ENCODE measurements at regions of chr2 and their contacts with region 1.

Region 1: GRCh38 chr2:234257856-234258561 is 207.5 kb downstream of the SPP2 start:
- DNase-seq: peak; percentile 92 to 98
- H3K4me3 ChIP-seq: peak overlapping the region; percentile 19; the same call in 1 of the 2 replicates
- H3K27ac ChIP-seq: peak overlapping the region; percentile 88
- H3K4me1 ChIP-seq: peaks cover 61% of the 10 kb centered on the region
- H3K27me3 ChIP-seq: no peaks in the 10 kb centered on the region
- CTCF ChIP-seq: peak; percentile 85

Region 2: GRCh38 chr2:234169187-234169570 is 88.8 kb before region 1 on chr2:
- CTCF ChIA-PET with region 1: no interaction called
- POLR2A ChIA-PET with region 1: no interaction called
- intact Hi-C with region 1: loop called (anchors 1 kb)
- DNase-seq: peak; percentile 60 to 79
- H3K4me3 ChIP-seq: no peak overlapping the region
- H3K27ac ChIP-seq: no peak overlapping the region
- H3K4me1 ChIP-seq: peaks cover 31% of the 10 kb centered on the region
- H3K27me3 ChIP-seq: no peaks in the 10 kb centered on the region
- CTCF ChIP-seq: no peak

Region 3: GRCh38 chr2:234203135-234203984 is 54.6 kb before region 1 on chr2:
- CTCF ChIA-PET with region 1: no interaction called
- POLR2A ChIA-PET with region 1: interaction called, 3 read pairs
- intact Hi-C with region 1: loop called (anchors 1 kb)
- DNase-seq: peak; percentile 63 to 98
- H3K4me3 ChIP-seq: peak overlapping the region; percentile 1; the same call in 1 of the 2 replicates
- H3K27ac ChIP-seq: peak overlapping the region; percentile 91
- H3K4me1 ChIP-seq: peaks cover 44% of the 10 kb centered on the region
- H3K27me3 ChIP-seq: no peaks in the 10 kb centered on the region
- CTCF ChIP-seq: no peak

Region 4: DNA sequence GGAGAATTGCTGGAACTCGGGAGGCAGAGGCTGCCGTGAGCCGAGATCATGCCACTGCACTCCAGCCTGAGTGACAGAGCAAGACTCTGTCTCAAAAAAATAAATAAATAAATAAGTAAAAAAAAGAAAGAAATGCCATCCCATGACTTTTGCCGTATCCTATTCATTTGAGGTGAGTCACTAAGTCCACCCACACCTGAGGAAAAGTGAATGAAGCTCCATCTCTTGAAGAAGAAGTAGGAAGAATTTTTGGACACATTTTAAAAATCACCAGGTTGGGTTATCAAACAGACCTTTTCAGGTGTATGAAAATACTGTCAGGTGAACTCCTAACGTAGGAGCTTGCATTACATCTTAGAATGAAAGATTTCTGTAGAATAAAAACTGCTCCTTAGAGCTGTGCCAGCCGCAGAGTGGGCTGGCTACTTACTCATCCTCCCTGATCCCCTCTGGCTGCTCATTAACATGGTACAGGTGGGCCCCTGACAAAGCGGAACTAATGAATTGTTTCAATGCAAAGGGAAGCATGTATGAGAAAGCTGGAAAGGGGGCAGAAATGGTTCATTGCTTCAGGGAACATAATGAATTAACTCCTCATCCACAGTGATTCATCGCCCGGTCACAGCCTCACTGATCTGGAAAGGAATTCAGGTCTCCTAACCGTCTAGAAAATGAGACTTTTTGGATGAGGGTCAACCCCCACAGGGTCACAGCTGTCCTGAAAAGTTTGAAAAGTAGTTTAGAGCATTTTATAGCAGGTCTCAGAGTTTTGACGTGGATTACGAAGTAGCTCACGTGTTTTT is 16.2 kb before region 1 on chr2:
- CTCF ChIA-PET with region 1: interaction called, 10 read pairs
- POLR2A ChIA-PET with region 1: no interaction called
- intact Hi-C with region 1: loop called (anchors 2 kb)
- DNase-seq: peak; percentile 68 to 95
- H3K4me3 ChIP-seq: peak overlapping the region; percentile 36; the same call in 1 of the 2 replicates
- H3K27ac ChIP-seq: peak overlapping the region; percentile 91
- H3K4me1 ChIP-seq: peaks cover 68% of the 10 kb centered on the region
- H3K27me3 ChIP-seq: no peaks in the 10 kb centered on the region
- CTCF ChIP-seq: no peak

Region 5: DNA sequence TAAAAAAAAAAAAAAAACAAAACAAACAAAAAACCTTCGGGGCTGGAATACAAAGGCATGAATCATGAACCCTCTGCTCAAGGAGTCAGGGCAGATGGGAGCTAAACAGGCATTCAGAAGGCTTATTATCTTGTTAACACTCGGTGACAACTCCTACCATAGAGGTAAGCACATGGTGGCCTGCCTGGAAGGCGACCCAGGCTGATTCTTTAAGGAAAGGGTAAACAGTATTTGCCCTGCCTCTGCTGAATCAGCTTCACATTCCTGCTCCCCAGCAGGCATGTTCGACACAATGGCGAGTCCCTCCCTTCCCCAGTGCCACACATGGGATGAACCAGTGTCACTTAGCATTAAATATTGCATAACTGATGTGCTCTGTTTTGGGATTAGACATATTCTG is 46.9 kb after region 1 on chr2:
- CTCF ChIA-PET with region 1: no interaction called
- POLR2A ChIA-PET with region 1: interaction called, 10 read pairs
- intact Hi-C with region 1: no loop called
- DNase-seq: peak; percentile 79 to 95
- H3K4me3 ChIP-seq: no peak overlapping the region
- H3K27ac ChIP-seq: peak overlapping the region; percentile 60
- H3K4me1 ChIP-seq: peaks cover 43% of the 10 kb centered on the region
- H3K27me3 ChIP-seq: no peaks in the 10 kb centered on the region
- CTCF ChIP-seq: no peak

Region 6: DNA sequence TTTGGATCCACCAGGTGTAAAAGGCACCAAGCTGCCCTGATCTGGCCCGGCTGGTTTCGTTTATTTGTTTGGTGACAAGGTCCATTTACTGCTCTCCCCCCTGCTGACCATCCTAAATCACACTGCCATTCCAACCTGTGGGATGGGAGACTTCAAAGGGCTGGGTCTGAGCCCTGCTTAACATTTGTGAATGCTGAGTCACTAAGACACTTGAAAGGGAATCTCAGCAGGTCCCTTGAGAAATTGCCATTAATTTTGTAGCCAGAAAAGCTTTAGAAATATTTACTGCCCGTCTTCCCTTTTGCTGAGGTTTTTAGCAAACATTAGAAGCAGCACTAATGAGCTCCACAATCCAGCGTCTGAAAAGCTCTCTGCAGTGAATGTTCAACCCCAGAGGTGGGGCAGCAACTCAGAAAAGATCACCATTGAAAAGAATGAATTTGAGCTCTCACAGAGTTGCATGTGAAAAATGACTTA is 105.0 kb after region 1 on chr2:
- CTCF ChIA-PET with region 1: no interaction called
- POLR2A ChIA-PET with region 1: no interaction called
- intact Hi-C with region 1: loop called (anchors 2 kb)
- DNase-seq: peak; percentile 73 to 99
- H3K4me3 ChIP-seq: peak overlapping the region; percentile 32; the same call in 1 of the 2 replicates
- H3K27ac ChIP-seq: peak overlapping the region; percentile 86
- H3K4me1 ChIP-seq: peaks cover 78% of the 10 kb centered on the region
- H3K27me3 ChIP-seq: no peaks in the 10 kb centered on the region
- CTCF ChIP-seq: no peak

Region 7: GRCh38 chr2:234500394-234501006 is 242.5 kb after region 1 on chr2:
- CTCF ChIA-PET with region 1: no interaction called
- POLR2A ChIA-PET with region 1: interaction called, 5 read pairs
- intact Hi-C with region 1: loop called (anchors 1 kb)
- DNase-seq: peak; percentile 46 to 57
- H3K4me3 ChIP-seq: no peak overlapping the region
- H3K27ac ChIP-seq: no peak overlapping the region
- H3K4me1 ChIP-seq: peaks cover 17% of the 10 kb centered on the region
- H3K27me3 ChIP-seq: no peaks in the 10 kb centered on the region
- CTCF ChIP-seq: peak; percentile 70